ENCODE measurements at regions of chr14 and their contacts with region 1.

Region 1: GRCh38 chr14:77314043-77314442 is 6.6 kb downstream of the POMT2 start:
- DNase-seq: no peak
- ATAC-seq: no peak
- H3K4me3 Mint-ChIP-seq: no peak overlapping the region
- H3K27ac Mint-ChIP-seq: no peak overlapping the region
- H3K4me1 Mint-ChIP-seq: peaks cover under 1% of the 10 kb centered on the region
- H3K27me3 Mint-ChIP-seq: no peaks in the 10 kb centered on the region
- CTCF ChIP-seq: no peak

Region 2: DNA sequence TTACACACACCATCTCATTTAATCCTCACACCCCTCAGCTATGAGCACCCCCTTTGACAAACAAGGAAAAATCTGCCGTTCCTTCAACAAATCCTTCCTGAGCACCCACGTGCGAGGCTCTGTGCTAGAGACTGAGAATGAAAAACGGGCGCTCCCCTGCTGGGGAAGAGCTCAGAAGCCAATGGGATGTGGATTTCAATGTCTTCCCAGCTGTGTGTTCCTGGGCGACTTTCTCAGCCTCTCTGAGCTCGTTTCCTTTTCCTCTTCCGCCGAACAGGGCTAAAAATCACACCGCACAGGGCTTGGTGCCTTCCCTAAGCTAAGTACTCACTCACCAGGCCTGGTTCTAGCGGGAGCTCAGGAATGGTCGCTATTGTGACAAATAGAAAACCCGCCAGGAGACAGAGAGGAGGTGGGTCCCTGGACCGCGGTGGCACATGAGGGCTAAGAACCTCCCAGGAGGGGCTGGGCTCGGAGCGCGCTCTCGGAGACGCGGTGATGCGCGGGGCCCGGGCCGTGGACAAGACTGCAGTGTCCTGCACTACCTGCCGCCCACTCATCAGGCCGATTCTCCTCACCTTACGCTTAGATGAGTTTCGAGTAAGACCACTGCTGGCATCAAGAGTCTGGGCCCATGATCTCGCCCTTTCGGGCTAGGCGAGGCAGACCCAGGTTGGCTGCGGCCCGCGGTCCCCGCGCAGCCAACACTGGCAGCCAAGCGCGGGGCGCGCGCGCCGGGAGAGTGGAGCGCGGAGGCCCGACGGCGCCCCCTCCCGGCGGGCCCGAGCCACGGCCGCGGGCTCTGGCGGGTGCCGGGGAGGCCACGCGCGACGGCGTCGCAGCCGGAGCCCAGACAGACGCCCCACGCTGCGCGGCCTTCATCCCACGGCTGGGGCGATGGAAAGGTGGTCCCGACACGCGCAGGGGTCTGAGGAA is 189.4 kb before region 1 on chr14:
- CTCF ChIA-PET with region 1: interaction called, 10 read pairs
- POLR2A ChIA-PET with region 1: no interaction called
- intact Hi-C with region 1: no loop called
- DNase-seq: peak; percentile 61
- ATAC-seq: peak; percentile 75
- H3K4me3 Mint-ChIP-seq: peak overlapping the region; percentile 69
- H3K27ac Mint-ChIP-seq: peak overlapping the region; percentile 58
- H3K4me1 Mint-ChIP-seq: peaks cover 36% of the 10 kb centered on the region
- H3K27me3 Mint-ChIP-seq: peaks cover 21% of the 10 kb centered on the region
- CTCF ChIP-seq: peak; percentile 81

Region 3: DNA sequence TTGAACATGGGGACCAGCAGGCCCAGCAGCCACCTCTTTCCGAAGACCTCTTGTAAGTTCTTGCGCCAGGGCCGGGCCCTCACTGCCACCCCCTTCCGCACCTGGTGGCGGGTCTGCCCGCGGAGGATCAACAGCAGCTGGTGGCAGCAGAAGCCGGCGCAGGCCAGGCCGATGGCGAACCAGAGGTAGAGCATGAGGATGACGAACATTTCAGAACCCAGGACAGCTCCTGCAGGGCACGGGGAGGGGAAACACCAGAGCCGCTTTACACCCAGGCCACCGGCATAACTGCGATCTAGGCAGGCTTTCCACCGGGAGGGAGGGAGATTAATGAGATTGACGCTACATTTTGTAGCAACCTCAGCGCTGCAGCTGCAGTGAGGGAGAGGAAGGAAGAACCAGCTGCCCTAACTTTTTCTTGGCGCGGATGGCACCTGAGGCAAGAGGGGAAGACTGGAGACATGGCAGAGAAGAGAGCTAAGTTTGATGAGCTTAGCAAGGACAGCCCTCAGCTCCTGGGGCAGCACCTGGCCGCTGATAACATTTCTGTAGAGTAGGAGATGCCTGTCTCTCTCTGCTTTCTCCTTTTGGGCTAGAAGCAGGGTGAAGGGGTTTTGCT is 180.2 kb before region 1 on chr14:
- CTCF ChIA-PET with region 1: interaction called, 11 read pairs
- POLR2A ChIA-PET with region 1: no interaction called
- intact Hi-C with region 1: no loop called
- DNase-seq: peak; percentile 81
- ATAC-seq: peak; percentile 96
- H3K4me3 Mint-ChIP-seq: no peak overlapping the region
- H3K27ac Mint-ChIP-seq: no peak overlapping the region
- H3K4me1 Mint-ChIP-seq: no peaks in the 10 kb centered on the region
- H3K27me3 Mint-ChIP-seq: peaks cover 47% of the 10 kb centered on the region
- CTCF ChIP-seq: no peak

Region 4: DNA sequence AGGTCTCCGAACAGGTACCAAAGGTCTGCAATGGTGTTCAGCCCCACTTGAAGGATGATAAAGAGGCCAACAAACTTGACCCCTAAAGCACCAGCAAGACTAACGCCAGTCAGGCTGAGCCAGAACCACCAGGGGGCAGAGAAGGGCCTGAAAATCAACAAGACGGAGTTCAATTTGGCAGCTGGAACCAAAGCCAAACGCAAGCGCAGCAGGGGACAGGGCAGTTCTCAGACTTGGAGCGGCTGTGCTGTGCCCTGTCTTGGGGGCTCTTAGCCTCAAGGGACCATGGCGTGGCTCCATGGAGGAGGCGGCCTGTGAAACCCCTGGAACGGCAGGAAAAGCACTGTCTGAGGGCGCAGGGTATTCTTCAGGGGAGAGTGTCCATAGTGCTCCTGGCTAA is 12.9 kb before region 1 on chr14:
- CTCF ChIA-PET with region 1: interaction called, 151 read pairs
- POLR2A ChIA-PET with region 1: interaction called, 4 read pairs
- intact Hi-C with region 1: no loop called
- DNase-seq: peak; percentile 78
- ATAC-seq: no peak
- H3K4me3 Mint-ChIP-seq: no peak overlapping the region
- H3K27ac Mint-ChIP-seq: no peak overlapping the region
- H3K4me1 Mint-ChIP-seq: peaks cover 14% of the 10 kb centered on the region
- H3K27me3 Mint-ChIP-seq: no peaks in the 10 kb centered on the region
- CTCF ChIP-seq: peak; percentile 74

Region 5: GRCh38 chr14:77325746-77326094 is 11.7 kb after region 1 on chr14:
- CTCF ChIA-PET with region 1: interaction called, 11 read pairs
- POLR2A ChIA-PET with region 1: no interaction called
- intact Hi-C with region 1: no loop called
- DNase-seq: no peak
- ATAC-seq: no peak
- H3K4me3 Mint-ChIP-seq: no peak overlapping the region
- H3K27ac Mint-ChIP-seq: no peak overlapping the region
- H3K4me1 Mint-ChIP-seq: peaks cover 9% of the 10 kb centered on the region
- H3K27me3 Mint-ChIP-seq: no peaks in the 10 kb centered on the region
- CTCF ChIP-seq: no peak

Measured in activated CD8-positive, alpha-beta T cell treated with anti-CD3 and anti-CD28 coated beads for 36 hours (primary cell).